Heart left ventricle (tissue), 16 donors: ENCODE measurements at regions of chr12 and their contacts with region 1.

Region 1: DNA sequence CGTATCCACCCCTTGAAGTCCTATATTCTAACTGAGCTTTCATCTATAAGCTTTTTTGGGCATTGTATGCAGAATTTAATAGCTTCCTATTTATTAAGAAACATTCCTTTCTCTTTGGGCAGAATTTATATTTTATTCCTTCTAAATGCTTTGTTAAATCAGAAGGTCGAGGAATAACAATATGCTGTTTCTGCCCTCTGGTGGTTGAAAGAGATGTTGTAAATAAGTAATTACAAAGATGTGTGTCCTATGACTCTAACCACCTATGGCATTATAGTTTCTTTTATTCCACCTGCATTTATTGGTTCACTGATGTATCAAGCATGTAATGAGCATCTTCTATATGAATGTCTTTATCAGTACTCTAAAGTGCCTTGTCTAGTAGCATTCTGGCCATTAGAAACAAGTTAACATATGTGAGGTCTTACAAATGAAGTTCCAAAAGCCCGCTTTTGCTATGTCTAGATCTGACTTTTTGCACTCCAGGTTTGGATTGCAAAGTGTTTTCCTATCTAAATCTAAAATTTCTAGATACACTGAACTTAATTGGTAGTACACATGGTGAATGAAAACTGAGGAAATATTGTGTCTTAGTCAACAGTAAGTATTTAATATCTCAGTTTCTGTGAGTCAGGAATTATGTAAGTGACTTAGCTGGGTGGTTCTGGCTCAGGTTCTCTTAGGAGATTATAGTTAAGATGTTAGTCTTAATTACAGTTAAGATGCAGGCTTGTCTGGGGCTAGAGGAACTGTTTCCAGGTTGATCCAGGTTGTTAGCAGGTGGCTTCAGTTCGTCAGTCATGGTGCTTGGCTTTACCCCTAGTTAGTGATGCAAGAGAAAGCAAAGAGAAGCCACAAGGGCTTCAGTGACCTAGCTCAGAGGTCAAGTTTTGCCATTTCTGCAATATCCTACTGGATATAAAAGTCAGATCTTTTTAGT is 57.5 kb downstream of the PLEKHA5 start:
- DNase-seq: no peak
- ATAC-seq: peak; percentile 28 to 53 (median 48)
- H3K4me3 ChIP-seq: peak overlapping the region in 1 of 12 donors; percentile 15
- H3K27ac ChIP-seq: peak overlapping the region in 11 of 12 donors; percentile 14 to 65 (median 49)
- H3K4me1 ChIP-seq: peaks cover 6 to 80% (median 39%) of the 10 kb centered on the region in 12 donors
- H3K27me3 ChIP-seq: no peaks in the 10 kb centered on the region
- CTCF ChIP-seq: peak; percentile 42 to 79 (median 68)
- POLR2A ChIP-seq: no peak

Region 2: GRCh38 chr12:18430425-18431048 is 756.5 kb before region 1 on chr12:
- intact Hi-C with region 1: loop called (anchors 2 to 10 kb)
- DNase-seq: peak in 3 of 5 donors; percentile 31 to 35 (median 33)
- ATAC-seq: peak; percentile 64 to 92 (median 87)
- H3K4me3 ChIP-seq: no peak overlapping the region
- H3K27ac ChIP-seq: no peak overlapping the region
- H3K4me1 ChIP-seq: peaks cover 0 to 16% (median 2%) of the 10 kb centered on the region in 12 donors
- H3K27me3 ChIP-seq: no peaks in the 10 kb centered on the region
- CTCF ChIP-seq: peak; percentile 56 to 90 (median 78)
- POLR2A ChIP-seq: no peak

Region 3: DNA sequence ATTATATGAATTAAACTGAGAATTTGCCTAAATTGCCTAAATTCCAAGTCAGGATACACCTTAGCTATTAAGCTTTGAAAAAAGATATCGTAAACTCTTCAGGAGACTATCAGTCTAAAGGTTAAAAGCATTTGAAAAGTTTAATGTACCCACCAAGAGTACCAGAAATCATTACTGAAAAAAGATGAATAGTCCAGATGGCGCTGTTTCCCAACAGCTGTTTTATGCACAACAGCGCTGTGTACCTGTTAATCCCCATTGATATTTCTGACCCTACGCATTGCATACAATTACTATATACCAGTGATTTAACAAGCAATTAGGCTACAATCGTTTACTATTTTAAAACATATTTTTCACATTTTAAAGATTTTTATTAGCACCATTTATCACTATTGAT is 634.2 kb before region 1 on chr12:
- intact Hi-C with region 1: loop called in 1 of 10 experiments (anchors 10 kb)
- DNase-seq: no peak
- ATAC-seq: no peak
- H3K4me3 ChIP-seq: no peak overlapping the region
- H3K27ac ChIP-seq: no peak overlapping the region
- H3K4me1 ChIP-seq: peaks cover 0 to 5% (median 0%) of the 10 kb centered on the region in 12 donors
- H3K27me3 ChIP-seq: no peaks in the 10 kb centered on the region
- CTCF ChIP-seq: peak in 6 of 12 donors; percentile 10 to 40 (median 28)
- POLR2A ChIP-seq: no peak

Region 4: DNA sequence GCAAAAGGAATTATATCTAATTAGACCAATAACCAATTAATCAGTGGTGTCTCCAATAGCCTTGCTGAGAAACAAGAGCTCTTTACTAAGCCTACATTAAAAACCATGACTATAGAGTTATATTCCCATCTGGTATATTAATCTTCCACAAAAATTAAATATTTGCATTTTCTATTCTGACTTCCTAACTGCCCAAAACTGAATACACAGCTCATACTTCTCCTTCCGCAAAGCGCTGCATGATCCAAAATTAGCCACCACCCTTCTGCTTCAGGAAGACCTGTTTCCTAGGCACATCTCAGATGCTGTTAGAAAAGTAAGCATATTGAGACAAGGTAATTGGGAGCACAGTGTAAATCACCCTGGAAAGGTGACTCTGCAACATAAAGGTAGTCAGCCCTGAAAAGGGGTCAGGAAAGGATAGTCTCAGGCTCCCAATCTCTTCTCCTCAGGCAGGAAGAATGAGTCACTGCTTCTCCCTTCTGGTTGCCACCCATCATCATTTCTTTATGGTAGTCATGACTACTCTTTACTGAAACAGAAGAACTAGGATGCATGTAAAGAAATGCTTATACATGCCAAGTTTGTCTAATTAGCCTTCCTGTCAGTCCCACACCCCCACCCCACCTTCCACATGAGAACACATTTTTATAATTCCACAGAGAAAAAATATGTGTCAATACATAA is 503.5 kb before region 1 on chr12:
- intact Hi-C with region 1: no loop called
- DNase-seq: no peak
- ATAC-seq: no peak
- H3K4me3 ChIP-seq: no peak overlapping the region
- H3K27ac ChIP-seq: no peak overlapping the region
- H3K4me1 ChIP-seq: no peaks in the 10 kb centered on the region
- H3K27me3 ChIP-seq: no peaks in the 10 kb centered on the region
- CTCF ChIP-seq: no peak
- POLR2A ChIP-seq: no peak

Region 5: GRCh38 chr12:18782827-18783572 is 404.0 kb before region 1 on chr12:
- intact Hi-C with region 1: no loop called
- DNase-seq: no peak
- ATAC-seq: no peak
- H3K4me3 ChIP-seq: no peak overlapping the region
- H3K27ac ChIP-seq: no peak overlapping the region
- H3K4me1 ChIP-seq: no peaks in the 10 kb centered on the region
- H3K27me3 ChIP-seq: no peaks in the 10 kb centered on the region
- CTCF ChIP-seq: no peak
- POLR2A ChIP-seq: no peak

Region 6: GRCh38 chr12:18861287-18861858 is 325.6 kb before region 1 on chr12:
- intact Hi-C with region 1: loop called in 8 of 10 experiments (anchors 5 to 10 kb)
- DNase-seq: no peak
- ATAC-seq: no peak
- H3K4me3 ChIP-seq: no peak overlapping the region
- H3K27ac ChIP-seq: no peak overlapping the region
- H3K4me1 ChIP-seq: peaks cover 0 to 7% (median 0%) of the 10 kb centered on the region in 12 donors
- H3K27me3 ChIP-seq: no peaks in the 10 kb centered on the region
- CTCF ChIP-seq: peak; percentile 29 to 57 (median 48)
- POLR2A ChIP-seq: no peak

Region 7: GRCh38 chr12:19031032-19031431 is 156.0 kb before region 1 on chr12:
- intact Hi-C with region 1: loop called in 4 of 10 experiments (anchors 5 to 10 kb)
- DNase-seq: no peak
- ATAC-seq: peak; percentile 16 to 61 (median 60)
- H3K4me3 ChIP-seq: no peak overlapping the region
- H3K27ac ChIP-seq: peak overlapping the region in 2 of 12 donors; percentile 11 to 25
- H3K4me1 ChIP-seq: peaks cover 0 to 21% (median 5%) of the 10 kb centered on the region in 12 donors
- H3K27me3 ChIP-seq: no peaks in the 10 kb centered on the region
- CTCF ChIP-seq: no peak
- POLR2A ChIP-seq: no peak

Region 8: DNA sequence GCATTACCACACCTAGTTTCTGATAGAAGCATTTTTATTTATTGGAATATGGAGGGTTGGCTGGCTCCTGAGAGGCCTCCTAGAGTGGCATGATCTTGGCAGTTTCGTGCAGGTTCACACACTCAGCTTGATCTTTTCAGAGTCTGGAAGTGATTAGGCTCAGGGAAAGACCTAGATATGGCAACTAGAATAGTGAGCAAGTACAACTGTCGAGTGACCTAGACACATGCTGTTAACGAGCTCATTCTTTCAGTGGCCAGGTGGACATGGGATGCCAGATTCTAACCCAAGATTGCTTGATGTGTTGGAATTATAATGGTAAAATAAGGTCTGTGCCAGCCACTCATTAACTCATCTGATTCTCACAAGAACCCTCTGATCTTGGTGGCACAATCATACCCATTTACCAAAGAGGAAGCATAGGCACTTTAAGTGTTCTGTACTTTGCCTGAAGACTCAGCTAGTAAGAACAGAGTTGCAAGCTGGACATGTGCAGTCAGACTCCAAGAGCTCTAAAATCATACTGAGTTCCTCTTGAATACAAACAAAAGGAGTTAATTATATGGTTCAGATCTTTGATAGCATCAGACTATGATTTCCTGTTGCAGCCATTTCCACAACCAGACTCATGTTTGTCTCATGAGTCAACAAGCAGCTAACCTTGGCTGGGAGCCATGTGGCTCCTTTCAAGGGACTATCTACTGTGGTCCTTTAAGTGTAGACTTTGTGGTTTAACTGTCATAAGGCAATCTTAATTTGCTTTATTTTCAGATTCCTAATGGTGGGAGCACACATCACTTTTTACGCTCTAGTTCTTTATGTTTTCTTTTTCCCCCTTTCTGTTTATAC is 86.7 kb after region 1 on chr12:
- intact Hi-C with region 1: loop called in 1 of 10 experiments (anchors 10 kb)
- DNase-seq: peak; percentile 72 to 85 (median 83)
- ATAC-seq: peak; percentile 24 to 94 (median 88)
- H3K4me3 ChIP-seq: no peak overlapping the region
- H3K27ac ChIP-seq: peak overlapping the region in 7 of 12 donors; percentile 6 to 41 (median 26)
- H3K4me1 ChIP-seq: peaks cover 0 to 26% (median 12%) of the 10 kb centered on the region in 12 donors
- H3K27me3 ChIP-seq: no peaks in the 10 kb centered on the region
- CTCF ChIP-seq: no peak
- POLR2A ChIP-seq: no peak